Activated CD4-positive, alpha-beta memory T cell treated with anti-CD3 and anti-CD28 coated beads for 36 hours (primary cell): ENCODE measurements at regions of chr6 and their contacts with region 1.

Region 1: DNA sequence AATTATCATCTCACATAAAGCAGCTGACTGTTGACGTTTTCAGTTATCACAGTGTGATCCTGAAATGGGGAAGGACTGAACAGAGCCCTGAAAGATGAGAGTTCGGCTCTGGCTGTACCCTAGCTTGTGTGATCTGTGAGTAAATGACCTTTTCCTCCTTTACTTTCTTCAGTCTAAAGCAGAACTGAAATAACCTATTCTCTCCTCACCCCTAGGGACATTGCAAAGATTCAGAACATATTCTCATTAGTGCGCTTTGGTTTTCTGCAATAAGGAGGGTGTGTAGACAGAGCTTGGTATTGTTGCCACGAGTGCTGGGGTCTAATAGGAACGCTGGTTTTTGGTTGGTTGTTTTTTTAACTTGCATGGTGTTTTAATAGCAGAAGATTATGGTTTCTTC is 16.7 kb downstream of the FARS2 start:
- DNase-seq: no peak
- H3K4me3 Mint-ChIP-seq: no peak overlapping the region
- H3K27ac Mint-ChIP-seq: peak overlapping the region; percentile 55
- H3K4me1 Mint-ChIP-seq: peaks cover 76% of the 10 kb centered on the region
- H3K27me3 Mint-ChIP-seq: no peaks in the 10 kb centered on the region

Region 2: DNA sequence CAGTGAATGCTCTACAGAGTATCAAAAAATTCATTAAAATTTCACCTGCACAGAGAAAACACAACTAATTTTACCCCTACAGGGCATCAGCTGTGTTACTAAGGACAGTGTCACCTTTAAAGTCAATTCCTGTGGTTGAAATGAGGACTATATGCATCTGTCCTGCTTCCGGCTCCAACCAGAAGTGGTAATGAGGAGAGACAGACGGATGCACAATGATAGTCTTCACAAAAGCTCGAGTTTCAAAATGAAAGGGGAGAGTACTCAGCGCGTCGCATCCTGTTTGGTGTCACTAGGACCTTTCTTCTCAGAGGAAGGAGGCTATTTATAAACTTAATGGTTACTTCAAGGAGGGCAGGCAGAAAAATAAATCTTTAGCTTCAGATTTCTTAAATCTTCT is 103.8 kb before region 1 on chr6:
- CTCF ChIA-PET with region 1: no interaction called
- POLR2A ChIA-PET with region 1: interaction called, 3 read pairs
- intact Hi-C with region 1: loop called (anchors 1 kb)
- DNase-seq: peak; percentile 78
- H3K4me3 Mint-ChIP-seq: peak overlapping the region; percentile 27
- H3K27ac Mint-ChIP-seq: peak overlapping the region; percentile 71
- H3K4me1 Mint-ChIP-seq: peaks cover 40% of the 10 kb centered on the region
- H3K27me3 Mint-ChIP-seq: no peaks in the 10 kb centered on the region

Region 3: DNA sequence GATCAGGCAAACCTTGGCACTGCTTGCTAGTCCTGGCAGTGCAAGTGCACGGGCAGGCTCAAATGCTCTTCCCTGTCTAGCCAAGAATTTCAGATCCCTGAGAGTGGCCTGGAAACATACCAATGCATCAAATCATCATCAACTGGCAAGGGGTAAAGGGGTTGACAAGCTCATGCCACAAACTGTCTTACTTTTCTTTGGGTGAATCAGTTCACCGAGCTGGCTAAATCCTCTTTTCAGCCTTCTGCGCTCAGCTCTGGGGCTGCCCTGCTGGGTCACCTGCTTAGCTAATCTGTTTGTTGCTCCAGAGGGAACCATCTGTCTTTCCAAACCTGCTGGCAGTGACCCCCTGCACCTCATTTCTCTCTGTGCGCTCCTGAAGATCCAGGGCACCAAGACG is 76.8 kb before region 1 on chr6:
- CTCF ChIA-PET with region 1: no interaction called
- POLR2A ChIA-PET with region 1: interaction called, 4 read pairs
- intact Hi-C with region 1: loop called (anchors 1 kb)
- DNase-seq: no peak
- H3K4me3 Mint-ChIP-seq: no peak overlapping the region
- H3K27ac Mint-ChIP-seq: no peak overlapping the region
- H3K4me1 Mint-ChIP-seq: peaks cover 25% of the 10 kb centered on the region
- H3K27me3 Mint-ChIP-seq: no peaks in the 10 kb centered on the region

Region 4: DNA sequence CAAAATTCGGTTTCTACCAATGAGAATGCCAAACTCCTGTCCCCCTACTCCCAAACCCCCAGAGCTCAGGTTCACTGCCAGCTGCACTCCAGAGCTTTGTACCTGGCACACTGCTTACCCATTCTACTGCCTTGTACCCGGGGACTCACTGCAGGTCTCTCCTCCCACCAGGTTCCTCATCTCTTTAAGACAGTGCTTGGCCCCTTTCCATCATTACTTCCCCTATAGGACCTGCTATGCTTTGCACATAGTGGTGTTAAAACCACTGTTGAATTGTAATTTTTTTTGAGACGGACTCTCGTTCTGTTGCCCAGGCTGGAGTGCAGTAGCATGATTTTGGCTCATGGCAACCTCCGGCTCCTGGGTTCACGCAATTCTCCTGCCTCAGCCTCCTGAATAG is 43.2 kb before region 1 on chr6:
- CTCF ChIA-PET with region 1: no interaction called
- POLR2A ChIA-PET with region 1: no interaction called
- intact Hi-C with region 1: no loop called
- DNase-seq: no peak
- H3K4me3 Mint-ChIP-seq: no peak overlapping the region
- H3K27ac Mint-ChIP-seq: no peak overlapping the region
- H3K4me1 Mint-ChIP-seq: peaks cover 13% of the 10 kb centered on the region
- H3K27me3 Mint-ChIP-seq: no peaks in the 10 kb centered on the region

Region 5: DNA sequence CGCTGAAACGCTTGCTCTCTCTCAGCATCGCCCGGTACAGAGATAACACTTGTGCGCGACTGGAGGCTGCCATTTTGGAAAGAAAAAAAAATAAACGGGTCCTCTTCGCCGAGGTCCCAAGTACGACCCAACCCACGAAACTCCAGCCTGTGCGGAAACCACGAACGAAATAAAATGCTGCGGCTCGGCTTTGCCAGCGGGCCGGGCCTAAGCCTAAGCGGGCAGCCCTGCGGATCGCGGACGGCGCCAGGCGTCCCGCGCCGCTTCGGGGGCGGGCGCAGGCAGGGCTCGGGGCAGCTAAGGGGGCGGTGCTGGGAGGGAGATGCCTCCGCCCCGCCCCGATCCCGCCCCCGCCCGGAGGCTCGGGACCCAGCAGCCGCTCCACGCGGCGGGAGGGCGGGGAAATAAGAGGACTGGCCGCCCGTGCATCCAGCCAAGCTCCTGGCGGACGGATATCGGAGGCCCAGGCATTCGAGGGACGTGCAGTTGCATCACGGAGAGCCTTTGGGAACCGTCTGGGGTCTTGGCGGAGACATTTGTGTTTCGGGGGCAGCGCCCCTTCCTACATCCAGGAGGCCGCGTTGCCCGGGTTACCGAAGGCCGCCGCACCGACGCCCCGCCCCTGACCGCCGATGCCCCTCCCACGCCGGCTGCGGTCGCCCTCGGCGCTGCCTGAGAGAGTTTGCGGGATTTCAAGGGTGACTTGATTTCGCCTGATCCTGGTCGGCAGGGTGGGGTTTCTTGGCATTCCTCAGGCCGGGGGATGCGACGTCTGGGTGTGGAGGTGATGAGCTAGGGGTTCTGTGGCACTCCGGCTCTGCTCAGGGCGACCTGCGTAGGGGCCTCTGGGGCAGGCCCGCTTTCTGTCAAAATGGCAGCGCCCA is 17.1 kb before region 1 on chr6 and contains the starts of genes FARS2 and LYRM4:
- CTCF ChIA-PET with region 1: interaction called, 11 read pairs
- POLR2A ChIA-PET with region 1: interaction called, 22 read pairs
- intact Hi-C with region 1: loop called (anchors 1 kb)
- DNase-seq: peak; percentile 93
- H3K4me3 Mint-ChIP-seq: peak within 1 kb of the TSS; percentile 98
- H3K27ac Mint-ChIP-seq: peak within 1 kb of the TSS; percentile 99
- H3K4me1 Mint-ChIP-seq: peaks cover 36% of the 10 kb centered on the region
- H3K27me3 Mint-ChIP-seq: no peaks in the 10 kb centered on the region
- total RNA-seq, gene FARS2: 22.7 to 23.7 TPM
- total RNA-seq, gene LYRM4: 50.6 to 53.6 TPM

Region 6: DNA sequence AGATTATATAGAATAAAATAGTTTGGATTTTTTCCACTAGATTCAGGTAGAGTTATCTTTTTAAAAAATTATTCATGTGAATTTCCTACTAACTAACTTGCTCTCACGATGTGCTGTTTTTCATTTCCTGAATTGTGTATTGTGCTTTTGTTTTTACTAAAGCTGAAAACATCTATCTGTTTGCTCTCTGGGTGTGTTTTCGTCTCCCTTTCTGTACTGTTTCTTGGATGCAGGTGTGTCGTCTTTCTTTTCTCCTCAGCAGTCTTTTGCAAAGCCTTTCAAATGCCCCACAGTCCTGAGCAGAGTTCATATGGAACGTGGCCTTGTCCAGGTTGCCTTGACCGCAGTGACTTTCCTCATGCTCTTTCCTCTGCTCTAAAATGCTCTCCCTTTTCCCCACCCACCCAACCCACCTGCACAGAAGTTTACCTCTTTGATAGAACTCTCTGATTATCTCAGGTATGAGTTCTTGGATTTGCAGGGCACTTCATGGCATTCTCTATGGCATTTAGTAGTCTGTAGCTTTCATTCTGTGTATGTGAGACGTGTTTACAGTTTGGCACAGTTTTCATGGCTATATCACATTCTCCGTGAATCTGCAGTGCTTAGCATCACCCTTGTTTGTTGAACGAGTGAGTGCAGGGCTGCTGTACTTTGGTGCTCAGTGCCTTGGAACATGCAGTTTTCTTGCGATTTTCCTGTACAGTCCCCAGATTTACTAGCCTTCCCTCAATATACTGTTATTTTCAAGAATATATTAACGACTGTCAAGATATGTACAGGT is 60.3 kb after region 1 on chr6:
- CTCF ChIA-PET with region 1: no interaction called
- POLR2A ChIA-PET with region 1: no interaction called
- intact Hi-C with region 1: loop called (anchors 2 kb)
- DNase-seq: no peak
- H3K4me3 Mint-ChIP-seq: no peak overlapping the region
- H3K27ac Mint-ChIP-seq: no peak overlapping the region
- H3K4me1 Mint-ChIP-seq: peaks cover 35% of the 10 kb centered on the region
- H3K27me3 Mint-ChIP-seq: no peaks in the 10 kb centered on the region